ENCODE measurements at regions of chr1 and their contacts with region 1.

Region 1: GRCh38 chr1:241611063-241611462 is 29.1 kb downstream of the CHML start:
- DNase-seq: no peak
- H3K4me3 ChIP-seq: no peak overlapping the region
- H3K27ac ChIP-seq: no peak overlapping the region
- H3K4me1 ChIP-seq: no peaks in the 10 kb centered on the region
- H3K27me3 ChIP-seq: no peaks in the 10 kb centered on the region
- CTCF ChIP-seq: peak in 2 of 3 experiments; percentile 34 to 48; a peak in 2 of 4 replicates
- EP300 ChIP-seq: no peak
- POLR2A ChIP-seq: no peak
- RAD21 ChIP-seq: peak; percentile 73

Region 2: GRCh38 chr1:241495741-241496140 is 115.3 kb before region 1 on chr1:
- CTCF ChIA-PET with region 1: no interaction called
- POLR2A ChIA-PET with region 1: no interaction called
- DNase-seq: no peak
- H3K4me3 ChIP-seq: no peak overlapping the region
- H3K27ac ChIP-seq: no peak overlapping the region
- H3K4me1 ChIP-seq: no peaks in the 10 kb centered on the region
- H3K27me3 ChIP-seq: no peaks in the 10 kb centered on the region
- CTCF ChIP-seq: no peak
- EP300 ChIP-seq: no peak
- POLR2A ChIP-seq: no peak
- RAD21 ChIP-seq: no peak

Region 3: GRCh38 chr1:241600496-241600901 is 10.6 kb before region 1 on chr1:
- CTCF ChIA-PET with region 1: interaction called, 14 read pairs
- POLR2A ChIA-PET with region 1: no interaction called
- DNase-seq: no peak
- H3K4me3 ChIP-seq: no peak overlapping the region
- H3K27ac ChIP-seq: no peak overlapping the region
- H3K4me1 ChIP-seq: no peaks in the 10 kb centered on the region
- H3K27me3 ChIP-seq: no peaks in the 10 kb centered on the region
- CTCF ChIP-seq: no peak
- EP300 ChIP-seq: no peak
- POLR2A ChIP-seq: no peak
- RAD21 ChIP-seq: no peak

Region 4: GRCh38 chr1:241632987-241633386 is 21.9 kb after region 1 on chr1:
- CTCF ChIA-PET with region 1: interaction called, 12 read pairs
- POLR2A ChIA-PET with region 1: no interaction called
- DNase-seq: no peak
- H3K4me3 ChIP-seq: no peak overlapping the region
- H3K27ac ChIP-seq: no peak overlapping the region
- H3K4me1 ChIP-seq: peaks cover 0 to 6% (median 3%) of the 10 kb centered on the region in 4 experiments; a peak in 3 of 7 replicates
- H3K27me3 ChIP-seq: no peaks in the 10 kb centered on the region
- CTCF ChIP-seq: no peak
- EP300 ChIP-seq: no peak
- POLR2A ChIP-seq: no peak
- RAD21 ChIP-seq: no peak

Region 5: GRCh38 chr1:241799416-241799815 is 188.4 kb after region 1 on chr1:
- CTCF ChIA-PET with region 1: interaction called, 14 read pairs
- POLR2A ChIA-PET with region 1: no interaction called
- DNase-seq: no peak
- H3K4me3 ChIP-seq: no peak overlapping the region
- H3K27ac ChIP-seq: no peak overlapping the region
- H3K4me1 ChIP-seq: peaks cover 0 to 6% (median 0%) of the 10 kb centered on the region in 4 experiments; a peak in 2 of 7 replicates
- H3K27me3 ChIP-seq: no peaks in the 10 kb centered on the region
- CTCF ChIP-seq: no peak
- EP300 ChIP-seq: no peak
- POLR2A ChIP-seq: no peak
- RAD21 ChIP-seq: no peak

Region 6: GRCh38 chr1:241842565-241842964 is 231.5 kb after region 1 on chr1:
- CTCF ChIA-PET with region 1: interaction called, 22 read pairs
- POLR2A ChIA-PET with region 1: interaction called, 3 read pairs
- DNase-seq: no peak
- H3K4me3 ChIP-seq: no peak overlapping the region
- H3K27ac ChIP-seq: no peak overlapping the region
- H3K4me1 ChIP-seq: no peaks in the 10 kb centered on the region; a peak in 1 of 7 replicates
- H3K27me3 ChIP-seq: no peaks in the 10 kb centered on the region
- CTCF ChIP-seq: no peak
- EP300 ChIP-seq: no peak
- POLR2A ChIP-seq: no peak
- RAD21 ChIP-seq: no peak